GM13977 (cell line): ENCODE measurements at regions of chr6 and their contacts with region 1.

Region 1: DNA sequence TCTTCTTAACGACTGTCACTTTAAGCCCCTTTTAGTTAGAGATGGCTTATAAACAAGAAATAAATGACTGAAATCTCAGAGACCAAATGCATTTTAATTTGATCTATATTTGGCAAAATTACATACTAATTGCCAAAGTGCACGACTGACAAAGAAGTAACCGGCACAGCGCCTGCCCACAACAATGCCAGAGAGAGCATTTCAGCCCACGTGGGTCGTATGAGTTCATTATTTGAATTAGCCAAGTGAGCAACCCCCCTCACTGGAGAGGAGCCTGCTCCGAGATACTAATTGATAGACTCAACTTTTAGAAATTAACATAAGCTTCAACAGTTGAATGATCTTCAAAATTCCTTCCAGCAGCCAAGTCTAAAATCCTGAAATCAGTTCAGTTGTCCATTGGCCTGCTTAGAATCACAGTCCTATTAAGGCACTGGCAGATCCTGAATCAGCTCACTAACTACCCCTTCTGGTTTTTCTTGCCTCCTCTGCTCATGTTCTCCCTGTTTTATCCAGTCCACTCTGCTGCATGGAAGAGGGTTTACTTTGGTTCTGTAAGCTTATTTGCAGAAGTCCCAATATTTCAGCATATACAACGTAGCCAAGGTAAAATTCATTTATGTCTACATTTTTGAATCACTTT is 519.1 kb upstream of the AGPAT4 start:
- DNase-seq: no peak
- CTCF ChIP-seq: no peak

Region 2: GRCh38 chr6:161694995-161695394 is 98.0 kb before region 1 on chr6:
- in situ Hi-C with region 1: loop called (anchors 25 kb)
- DNase-seq: peak; percentile 32
- CTCF ChIP-seq: peak; percentile 46

Region 3: DNA sequence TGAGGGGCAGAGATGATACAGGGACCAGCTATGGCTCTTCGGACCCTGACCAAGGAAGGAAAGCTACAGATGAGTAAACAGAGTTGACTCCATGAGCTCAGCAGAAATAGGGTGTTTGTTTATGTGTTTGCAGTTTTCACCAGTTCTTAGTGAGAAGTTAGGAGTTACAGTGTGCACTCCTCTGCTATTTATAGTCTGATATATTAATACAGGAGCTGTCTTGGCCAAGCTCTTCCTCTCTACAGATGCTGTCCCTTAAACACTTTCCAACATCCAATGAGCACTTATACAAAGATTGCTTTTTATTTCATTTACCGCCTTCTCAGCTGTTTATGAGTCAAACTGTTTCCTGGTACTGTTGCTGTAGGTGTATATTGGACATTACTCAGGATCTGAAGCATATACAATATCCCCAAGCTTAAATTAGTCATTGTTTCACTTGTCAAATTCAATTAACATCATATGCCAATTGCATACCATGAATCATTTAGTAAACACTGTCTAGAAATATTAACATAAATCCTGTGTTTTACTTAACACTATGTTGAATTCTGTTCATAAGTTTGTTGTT is 316.6 kb after region 1 on chr6:
- in situ Hi-C with region 1: no loop called
- DNase-seq: no peak
- CTCF ChIP-seq: no peak